Breast epithelium (tissue), 4 donors: ENCODE measurements at regions of chr9 and their contacts with region 1.

Region 1: GRCh38 chr9:11356067-11356466 is 743.3 kb upstream of the PTPRD start:
- DNase-seq: no peak
- H3K4me3 ChIP-seq: no peak overlapping the region
- H3K27ac ChIP-seq: no peak overlapping the region
- H3K4me1 ChIP-seq: no peaks in the 10 kb centered on the region
- H3K27me3 ChIP-seq: no peaks in the 10 kb centered on the region
- CTCF ChIP-seq: no peak
- POLR2A ChIP-seq: no peak

Region 2: DNA sequence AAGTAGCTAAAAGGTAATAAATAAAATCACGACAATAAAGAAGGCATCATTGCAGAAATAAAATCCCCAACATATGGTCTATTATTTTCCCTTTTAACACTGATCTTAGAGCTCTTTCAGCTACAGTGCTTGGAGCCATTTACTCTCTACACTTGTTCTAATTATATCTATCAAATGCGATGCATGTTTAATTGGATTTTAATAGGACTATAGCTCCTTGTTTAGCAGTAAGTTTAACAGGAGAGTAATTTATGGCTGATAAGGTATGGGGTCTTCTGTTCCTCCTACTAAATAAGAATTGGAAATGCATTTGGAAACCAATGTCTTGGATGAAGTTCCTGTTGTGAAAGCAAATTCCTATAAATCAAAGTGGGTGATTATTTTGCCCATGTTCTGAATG is 439.1 kb before region 1 on chr9:
- intact Hi-C with region 1: loop called (anchors 5 kb)
- DNase-seq: no peak
- H3K4me3 ChIP-seq: no peak overlapping the region
- H3K27ac ChIP-seq: no peak overlapping the region
- H3K4me1 ChIP-seq: no peaks in the 10 kb centered on the region
- H3K27me3 ChIP-seq: no peaks in the 10 kb centered on the region
- CTCF ChIP-seq: no peak
- POLR2A ChIP-seq: no peak

Region 3: GRCh38 chr9:11135851-11136250 is 220.2 kb before region 1 on chr9:
- intact Hi-C with region 1: no loop called
- DNase-seq: no peak
- H3K4me3 ChIP-seq: no peak overlapping the region
- H3K27ac ChIP-seq: no peak overlapping the region
- H3K4me1 ChIP-seq: no peaks in the 10 kb centered on the region
- H3K27me3 ChIP-seq: no peaks in the 10 kb centered on the region
- CTCF ChIP-seq: no peak
- POLR2A ChIP-seq: no peak

Region 4: DNA sequence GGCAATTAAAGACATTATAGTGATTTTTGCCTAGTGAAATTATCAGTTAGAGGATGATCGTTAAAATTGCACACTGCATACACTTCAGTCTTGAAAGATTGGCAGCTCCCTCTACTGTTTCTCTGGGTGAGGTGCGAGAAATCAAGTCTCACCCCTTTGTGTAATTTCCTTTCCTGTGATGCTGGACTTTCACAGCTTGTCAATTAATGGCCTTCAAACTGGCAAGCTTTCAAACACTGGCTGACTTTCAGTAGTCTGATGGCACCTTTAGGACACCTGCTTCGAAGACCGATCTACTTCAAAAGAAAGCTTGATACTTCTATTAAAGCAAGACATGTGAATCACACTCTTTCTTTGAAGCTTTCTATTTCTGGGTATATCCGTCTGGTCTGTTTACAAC is 36.5 kb before region 1 on chr9:
- intact Hi-C with region 1: no loop called
- DNase-seq: no peak
- H3K4me3 ChIP-seq: no peak overlapping the region
- H3K27ac ChIP-seq: no peak overlapping the region
- H3K4me1 ChIP-seq: no peaks in the 10 kb centered on the region
- H3K27me3 ChIP-seq: no peaks in the 10 kb centered on the region
- CTCF ChIP-seq: no peak
- POLR2A ChIP-seq: no peak

Region 5: GRCh38 chr9:11417782-11418181 is 61.7 kb after region 1 on chr9:
- intact Hi-C with region 1: no loop called
- DNase-seq: no peak
- H3K4me3 ChIP-seq: no peak overlapping the region
- H3K27ac ChIP-seq: no peak overlapping the region
- H3K4me1 ChIP-seq: no peaks in the 10 kb centered on the region
- H3K27me3 ChIP-seq: no peaks in the 10 kb centered on the region
- CTCF ChIP-seq: no peak
- POLR2A ChIP-seq: no peak